Heart left ventricle (tissue), 16 donors: ENCODE measurements at regions of chr1 and their contacts with region 1.

Region 1: DNA sequence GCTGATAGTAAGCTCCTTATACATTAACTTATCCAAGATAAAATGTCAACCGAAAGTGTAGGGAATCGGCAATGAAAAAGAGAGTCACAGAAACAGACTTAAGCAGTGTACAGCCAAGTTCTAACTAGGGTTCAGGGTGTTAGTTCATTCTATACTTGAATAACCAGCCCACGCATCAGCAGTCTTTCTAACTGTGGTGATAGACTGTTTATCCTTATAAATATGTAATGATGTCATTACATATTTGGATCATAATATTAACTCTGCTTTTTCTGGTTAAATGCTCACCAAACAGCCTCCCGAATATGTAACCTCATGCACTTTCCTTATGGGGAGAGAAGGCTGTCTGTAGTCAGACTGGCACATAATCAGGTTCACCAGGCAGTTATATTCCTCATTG is 11.0 kb downstream of the HMCN1 start:
- DNase-seq: no peak
- ATAC-seq: no peak
- H3K4me3 ChIP-seq: no peak overlapping the region
- H3K27ac ChIP-seq: no peak overlapping the region
- H3K4me1 ChIP-seq: peaks cover 0 to 7% (median 0%) of the 10 kb centered on the region in 12 donors
- H3K27me3 ChIP-seq: no peaks in the 10 kb centered on the region
- CTCF ChIP-seq: no peak
- POLR2A ChIP-seq: no peak

Region 2: GRCh38 chr1:185789501-185790193 is 44.5 kb after region 1 on chr1:
- intact Hi-C with region 1: loop called in 1 of 10 experiments (anchors 2 kb)
- DNase-seq: no peak
- ATAC-seq: peak in 1 of 4 donors; percentile 32
- H3K4me3 ChIP-seq: no peak overlapping the region
- H3K27ac ChIP-seq: peak overlapping the region in 4 of 12 donors; percentile 7 to 45 (median 15)
- H3K4me1 ChIP-seq: peaks cover 0 to 35% (median 17%) of the 10 kb centered on the region in 12 donors
- H3K27me3 ChIP-seq: no peaks in the 10 kb centered on the region
- CTCF ChIP-seq: no peak
- POLR2A ChIP-seq: no peak

Region 3: GRCh38 chr1:185837711-185838498 is 92.7 kb after region 1 on chr1:
- intact Hi-C with region 1: no loop called
- DNase-seq: peak in 1 of 5 donors; percentile 23
- ATAC-seq: no peak
- H3K4me3 ChIP-seq: no peak overlapping the region
- H3K27ac ChIP-seq: no peak overlapping the region
- H3K4me1 ChIP-seq: peaks cover 0 to 7% (median 0%) of the 10 kb centered on the region in 12 donors
- H3K27me3 ChIP-seq: no peaks in the 10 kb centered on the region
- CTCF ChIP-seq: no peak
- POLR2A ChIP-seq: no peak